Calu3 (cell line): ENCODE measurements at regions of chr6 and their contacts with region 1.

Region 1: DNA sequence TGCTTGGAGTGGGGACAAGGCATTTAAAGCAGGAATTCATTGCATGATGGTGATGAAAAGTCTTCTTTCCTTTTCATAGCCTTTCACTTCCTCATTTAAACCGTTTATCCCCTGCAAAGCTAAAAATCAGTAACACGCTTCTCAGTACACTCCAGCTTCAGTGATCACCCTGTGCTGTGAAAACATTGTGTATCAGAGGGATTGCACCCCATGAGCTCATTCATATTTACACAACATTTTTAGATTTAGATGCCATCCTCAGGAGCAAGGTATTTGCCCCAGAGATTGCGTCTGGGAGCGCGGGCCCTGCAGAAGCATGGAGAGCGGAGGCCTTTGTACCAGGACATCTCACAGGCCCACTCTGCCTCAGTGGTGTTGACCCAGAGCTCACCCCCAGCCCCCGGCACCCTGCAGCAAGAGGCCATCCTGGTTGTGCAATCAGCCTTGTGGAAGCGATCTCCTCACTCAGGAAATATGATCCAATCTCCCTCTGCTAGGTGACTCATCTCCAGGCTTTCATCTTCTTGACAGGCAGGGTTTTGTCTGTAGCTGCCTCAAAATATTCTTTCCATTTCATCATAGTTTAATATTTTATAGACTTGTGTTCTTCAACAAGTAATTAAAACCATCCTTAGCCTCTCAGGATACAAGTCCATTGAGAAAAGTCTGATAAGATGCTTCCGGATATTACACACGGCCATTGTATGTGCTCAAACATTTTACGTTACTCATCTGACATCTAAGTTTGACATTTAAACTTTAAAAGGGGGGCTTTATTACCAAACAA is 38.9 kb upstream of the THBS2 start:
- DNase-seq: peak; percentile 63
- H3K4me3 Mint-ChIP-seq: peak overlapping the region; percentile 51
- H3K27ac Mint-ChIP-seq: peak overlapping the region; percentile 95
- H3K4me1 Mint-ChIP-seq: peaks cover 46% of the 10 kb centered on the region
- H3K27me3 Mint-ChIP-seq: no peaks in the 10 kb centered on the region
- CTCF ChIP-seq: no peak

Region 2: GRCh38 chr6:169212897-169213813 is 79.4 kb before region 1 on chr6:
- CTCF ChIA-PET with region 1: no interaction called
- intact Hi-C with region 1: loop called (anchors 5 kb)
- DNase-seq: peak; percentile 96
- H3K4me3 Mint-ChIP-seq: peak overlapping the region; percentile 34
- H3K27ac Mint-ChIP-seq: no peak overlapping the region
- H3K4me1 Mint-ChIP-seq: peaks cover 39% of the 10 kb centered on the region
- H3K27me3 Mint-ChIP-seq: no peaks in the 10 kb centered on the region
- CTCF ChIP-seq: peak; percentile 34

Region 3: GRCh38 chr6:169452117-169452868 is 159.8 kb after region 1 on chr6:
- CTCF ChIA-PET with region 1: no interaction called
- intact Hi-C with region 1: loop called (anchors 10 kb)
- DNase-seq: peak; percentile 65
- H3K4me3 Mint-ChIP-seq: peak overlapping the region; percentile 72
- H3K27ac Mint-ChIP-seq: peak overlapping the region; percentile 87
- H3K4me1 Mint-ChIP-seq: peaks cover 39% of the 10 kb centered on the region
- H3K27me3 Mint-ChIP-seq: no peaks in the 10 kb centered on the region
- CTCF ChIP-seq: no peak